ENCODE measurements at regions of chr12 and their contacts with region 1.

Region 1: DNA sequence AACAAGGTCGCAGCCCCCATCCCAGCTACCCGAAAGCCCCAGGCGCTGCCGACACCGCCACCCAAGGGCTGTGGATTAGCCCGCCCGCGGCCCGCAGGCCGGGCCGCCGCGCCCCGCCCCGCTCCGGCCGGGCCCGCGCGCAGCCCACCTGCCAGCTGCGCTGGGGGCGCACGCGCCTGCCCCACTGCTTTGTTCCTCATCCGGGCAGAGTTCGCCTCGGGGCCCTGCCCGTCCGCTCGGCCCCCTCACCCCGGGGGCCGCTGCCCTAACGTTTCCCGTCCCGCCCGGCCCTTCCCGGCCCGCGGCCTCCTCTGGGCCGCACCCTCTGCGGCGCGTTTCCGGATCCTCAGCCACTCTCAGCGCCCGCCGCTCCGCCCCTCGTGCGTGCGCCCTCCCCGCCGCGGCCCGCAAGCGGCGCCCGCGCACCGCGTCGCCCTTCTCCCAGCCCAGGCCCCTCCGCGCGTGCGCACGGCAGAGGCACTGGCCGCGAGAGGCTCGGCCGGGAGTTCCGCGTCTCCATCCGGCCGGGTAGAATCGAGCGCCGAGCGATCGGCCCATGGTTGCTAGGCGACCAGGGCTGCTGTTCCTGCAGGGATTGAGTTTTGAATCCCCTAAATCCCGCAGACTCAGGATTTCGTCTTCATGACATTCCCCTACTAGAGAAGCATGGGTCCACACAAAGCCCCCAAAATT is at the start of gene PRDM4:
- DNase-seq: peak; percentile 97
- H3K4me3 ChIP-seq: peak within 1 kb of the TSS; percentile 84 to 94 (median 86)
- H3K27ac ChIP-seq: peak within 1 kb of the TSS; percentile 67 to 80 (median 76)
- H3K4me1 ChIP-seq: peaks cover 0 to 34% (median 25%) of the 10 kb centered on the region in 4 donors
- H3K27me3 ChIP-seq: no peaks in the 10 kb centered on the region
- CTCF ChIP-seq: peak in 1 of 4 experiments; percentile 29
- EP300 ChIP-seq: no peak
- POLR2A ChIP-seq: peak; percentile 46 to 54
- total RNA-seq, gene PRDM4: 19.7 to 25.7 (median 23.0) TPM

Region 2: GRCh38 chr12:107685360-107686248 is 75.4 kb before region 1 on chr12 and contains the start of gene PWP1:
- intact Hi-C with region 1: loop called (anchors 2 kb)
- DNase-seq: peak; percentile 95
- H3K4me3 ChIP-seq: peak within 1 kb of the TSS; percentile 66 to 95 (median 80)
- H3K27ac ChIP-seq: peak within 1 kb of the TSS; percentile 72 to 81 (median 78)
- H3K4me1 ChIP-seq: peaks cover 0 to 26% (median 18%) of the 10 kb centered on the region in 4 donors
- H3K27me3 ChIP-seq: peaks cover 0 to 5% (median 0%) of the 10 kb centered on the region in 3 donors
- CTCF ChIP-seq: no peak
- EP300 ChIP-seq: no peak
- POLR2A ChIP-seq: peak; percentile 62 to 66
- total RNA-seq, gene PWP1: 49.9 to 98.3 (median 75.8) TPM